Activated CD4-positive, alpha-beta T cell treated with anti-CD3 and anti-CD28 coated beads for 36 hours (primary cell): ENCODE measurements at regions of chr2 and their contacts with region 1.

Region 1: GRCh38 chr2:190947711-190948251 is 66.2 kb downstream of the STAT1 start:
- DNase-seq: no peak
- ATAC-seq: peak; percentile 68
- H3K4me3 Mint-ChIP-seq: no peak overlapping the region
- H3K27ac Mint-ChIP-seq: peak overlapping the region; percentile 15
- H3K4me1 Mint-ChIP-seq: peaks cover 11% of the 10 kb centered on the region
- H3K27me3 Mint-ChIP-seq: no peaks in the 10 kb centered on the region

Region 2: DNA sequence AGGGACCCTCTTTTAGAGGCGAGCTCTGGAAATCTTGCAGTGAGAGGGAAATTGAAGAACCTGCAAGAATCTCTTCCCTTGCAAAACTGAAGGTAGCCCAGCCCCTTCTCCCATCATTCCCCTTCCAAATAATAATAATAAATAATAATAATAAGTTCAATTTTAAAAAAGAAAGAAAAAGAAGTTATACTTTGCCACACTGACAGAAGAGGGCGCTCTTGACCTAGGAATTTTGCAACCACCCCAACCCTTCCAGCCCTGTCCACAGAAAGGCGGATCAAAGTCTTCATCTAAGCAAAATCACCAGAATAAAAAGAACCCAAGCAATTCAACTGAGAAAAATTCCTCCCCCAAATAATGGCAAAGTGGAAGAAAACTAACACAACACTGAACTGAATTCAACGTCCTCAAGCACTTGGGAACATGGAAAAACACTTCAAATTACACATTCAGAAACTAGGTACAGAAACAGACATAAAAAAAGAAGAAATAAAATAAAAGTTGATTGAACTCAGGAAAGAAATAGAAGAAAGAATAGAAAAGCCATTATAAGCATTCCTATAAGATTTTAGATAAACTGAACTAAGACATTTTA is 166.1 kb before region 1 on chr2:
- CTCF ChIA-PET with region 1: interaction called, 6 read pairs
- POLR2A ChIA-PET with region 1: no interaction called
- intact Hi-C with region 1: loop called (anchors 5 kb)
- DNase-seq: peak; percentile 77
- ATAC-seq: peak; percentile 58
- H3K4me3 Mint-ChIP-seq: no peak overlapping the region
- H3K27ac Mint-ChIP-seq: no peak overlapping the region
- H3K4me1 Mint-ChIP-seq: peaks cover 33% of the 10 kb centered on the region
- H3K27me3 Mint-ChIP-seq: no peaks in the 10 kb centered on the region

Region 3: GRCh38 chr2:190932514-190932913 is 15.3 kb before region 1 on chr2:
- CTCF ChIA-PET with region 1: interaction called, 13 read pairs
- POLR2A ChIA-PET with region 1: no interaction called
- intact Hi-C with region 1: no loop called
- DNase-seq: no peak
- ATAC-seq: no peak
- H3K4me3 Mint-ChIP-seq: no peak overlapping the region
- H3K27ac Mint-ChIP-seq: no peak overlapping the region
- H3K4me1 Mint-ChIP-seq: peaks cover 15% of the 10 kb centered on the region
- H3K27me3 Mint-ChIP-seq: no peaks in the 10 kb centered on the region

Region 4: DNA sequence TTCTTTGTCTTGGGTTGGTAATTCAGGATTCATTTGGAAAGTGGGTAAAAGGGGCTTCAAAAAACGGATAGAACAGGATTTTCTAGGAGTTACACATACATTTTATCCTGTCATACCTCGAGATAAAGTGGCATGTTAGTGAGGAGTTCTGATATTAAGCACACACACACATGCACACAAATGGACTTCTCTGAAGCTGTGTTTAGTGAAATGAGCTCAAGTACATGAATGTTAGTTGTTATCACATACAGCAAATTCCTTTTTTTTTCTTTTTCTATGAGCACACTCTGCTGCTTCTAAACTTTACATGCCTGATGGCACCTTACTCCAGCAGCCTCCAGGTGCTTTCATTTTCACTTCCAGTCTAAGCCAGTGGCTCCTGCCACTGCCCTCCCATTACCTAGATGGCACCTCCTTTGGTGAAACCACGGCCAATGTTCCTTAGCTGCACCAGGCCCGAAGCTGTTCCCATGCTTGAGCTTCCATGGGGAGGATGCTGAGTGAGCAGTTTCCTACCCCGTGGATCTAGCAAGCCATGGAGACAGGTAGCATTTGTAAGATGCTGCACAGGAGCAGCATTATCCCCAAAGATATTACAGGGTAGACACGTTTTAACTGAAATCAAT is 16.5 kb after region 1 on chr2:
- CTCF ChIA-PET with region 1: interaction called, 10 read pairs
- POLR2A ChIA-PET with region 1: interaction called, 3 read pairs
- intact Hi-C with region 1: no loop called
- DNase-seq: no peak
- ATAC-seq: peak; percentile 32
- H3K4me3 Mint-ChIP-seq: no peak overlapping the region
- H3K27ac Mint-ChIP-seq: peak overlapping the region; percentile 62
- H3K4me1 Mint-ChIP-seq: peaks cover 17% of the 10 kb centered on the region
- H3K27me3 Mint-ChIP-seq: no peaks in the 10 kb centered on the region

Region 5: DNA sequence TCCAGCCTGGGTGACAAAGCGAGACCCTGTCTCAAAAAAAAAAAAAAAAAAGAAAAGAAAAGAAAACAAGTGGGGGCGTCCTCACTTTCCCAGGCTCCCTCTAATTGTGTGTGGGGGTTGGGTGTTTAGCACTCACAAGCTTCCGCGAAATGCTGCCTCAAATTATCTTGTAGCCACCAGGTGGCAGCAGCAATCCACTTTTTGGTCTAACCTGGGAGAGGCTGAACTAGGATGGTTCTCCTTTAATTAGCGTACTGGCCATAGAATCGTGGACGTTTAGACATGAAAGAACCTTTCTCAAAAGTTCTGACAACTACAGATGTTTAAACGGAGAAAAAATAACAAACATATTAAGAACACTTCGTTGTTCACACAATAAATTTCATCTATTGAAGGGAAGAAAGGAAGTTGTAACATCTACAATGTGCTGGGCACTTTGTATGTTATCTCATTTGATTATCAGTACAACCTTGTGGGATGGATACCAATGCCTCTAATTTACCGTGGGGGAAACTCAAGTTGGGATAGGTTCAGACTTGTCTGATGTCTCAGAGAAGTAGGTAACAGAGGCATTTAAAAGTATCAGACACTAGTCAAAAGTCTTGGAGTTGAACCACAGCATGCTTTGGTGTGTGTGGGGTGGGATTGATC is 607.4 kb after region 1 on chr2:
- CTCF ChIA-PET with region 1: no interaction called
- POLR2A ChIA-PET with region 1: no interaction called
- intact Hi-C with region 1: no loop called
- DNase-seq: peak; percentile 90
- ATAC-seq: peak; percentile 93
- H3K4me3 Mint-ChIP-seq: no peak overlapping the region
- H3K27ac Mint-ChIP-seq: no peak overlapping the region
- H3K4me1 Mint-ChIP-seq: peaks cover 2% of the 10 kb centered on the region
- H3K27me3 Mint-ChIP-seq: peaks cover 14% of the 10 kb centered on the region